Esophagus muscularis mucosa (tissue), 4 donors: ENCODE measurements at regions of chr5 and their contacts with region 1.

Region 1: GRCh38 chr5:59275510-59276324 is 617.8 kb downstream of the PDE4D start:
- DNase-seq: no peak
- H3K4me3 ChIP-seq: peak overlapping the region; percentile 56 to 60 (median 60)
- H3K27ac ChIP-seq: peak overlapping the region; percentile 83 to 89 (median 84)
- H3K4me1 ChIP-seq: peaks cover 11 to 30% (median 27%) of the 10 kb centered on the region in 4 donors
- H3K27me3 ChIP-seq: no peaks in the 10 kb centered on the region
- CTCF ChIP-seq: no peak
- EP300 ChIP-seq: no peak
- POLR2A ChIP-seq: no peak

Region 2: GRCh38 chr5:59193616-59194319 is 81.9 kb before region 1 on chr5:
- intact Hi-C with region 1: loop called (anchors 5 kb)
- DNase-seq: no peak
- H3K4me3 ChIP-seq: no peak overlapping the region
- H3K27ac ChIP-seq: peak overlapping the region in 3 of 4 donors; percentile 2 to 37 (median 28)
- H3K4me1 ChIP-seq: peaks cover 4 to 45% (median 20%) of the 10 kb centered on the region in 4 donors
- H3K27me3 ChIP-seq: no peaks in the 10 kb centered on the region
- CTCF ChIP-seq: no peak
- EP300 ChIP-seq: no peak
- POLR2A ChIP-seq: no peak

Region 3: DNA sequence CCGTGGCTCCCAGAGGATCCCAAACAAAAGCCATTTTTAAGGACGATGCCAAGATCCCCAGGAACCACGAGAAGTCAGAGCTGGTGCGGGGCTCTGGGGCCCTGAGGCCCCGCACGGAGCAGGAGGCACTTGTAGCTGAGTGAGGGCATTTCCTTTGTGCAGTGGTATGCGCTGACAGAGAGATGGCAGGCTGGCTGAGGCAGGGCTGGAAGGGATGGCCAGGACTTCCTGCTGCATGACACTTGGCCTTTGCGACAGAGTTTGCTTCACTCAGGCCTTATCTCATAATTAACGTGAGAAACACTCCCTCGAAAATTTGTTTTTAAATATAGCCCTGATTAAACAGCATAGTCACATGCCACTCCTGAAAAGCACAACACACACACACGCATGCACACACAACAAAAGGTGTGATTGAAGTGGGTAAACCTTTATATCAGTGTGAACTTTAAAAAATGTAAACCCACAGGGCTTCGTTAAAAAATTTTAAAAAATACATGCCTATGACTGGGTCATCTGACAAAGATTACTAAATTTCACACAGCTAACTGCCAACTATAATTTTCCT is 81.2 kb after region 1 on chr5:
- intact Hi-C with region 1: loop called (anchors 5 kb)
- DNase-seq: no peak
- H3K4me3 ChIP-seq: no peak overlapping the region
- H3K27ac ChIP-seq: peak overlapping the region; percentile 67 to 78 (median 72)
- H3K4me1 ChIP-seq: peaks cover 24 to 60% (median 54%) of the 10 kb centered on the region in 4 donors
- H3K27me3 ChIP-seq: no peaks in the 10 kb centered on the region
- CTCF ChIP-seq: no peak
- EP300 ChIP-seq: no peak
- POLR2A ChIP-seq: no peak